ENCODE measurements at regions of chr4 and their contacts with region 1.

Region 1: DNA sequence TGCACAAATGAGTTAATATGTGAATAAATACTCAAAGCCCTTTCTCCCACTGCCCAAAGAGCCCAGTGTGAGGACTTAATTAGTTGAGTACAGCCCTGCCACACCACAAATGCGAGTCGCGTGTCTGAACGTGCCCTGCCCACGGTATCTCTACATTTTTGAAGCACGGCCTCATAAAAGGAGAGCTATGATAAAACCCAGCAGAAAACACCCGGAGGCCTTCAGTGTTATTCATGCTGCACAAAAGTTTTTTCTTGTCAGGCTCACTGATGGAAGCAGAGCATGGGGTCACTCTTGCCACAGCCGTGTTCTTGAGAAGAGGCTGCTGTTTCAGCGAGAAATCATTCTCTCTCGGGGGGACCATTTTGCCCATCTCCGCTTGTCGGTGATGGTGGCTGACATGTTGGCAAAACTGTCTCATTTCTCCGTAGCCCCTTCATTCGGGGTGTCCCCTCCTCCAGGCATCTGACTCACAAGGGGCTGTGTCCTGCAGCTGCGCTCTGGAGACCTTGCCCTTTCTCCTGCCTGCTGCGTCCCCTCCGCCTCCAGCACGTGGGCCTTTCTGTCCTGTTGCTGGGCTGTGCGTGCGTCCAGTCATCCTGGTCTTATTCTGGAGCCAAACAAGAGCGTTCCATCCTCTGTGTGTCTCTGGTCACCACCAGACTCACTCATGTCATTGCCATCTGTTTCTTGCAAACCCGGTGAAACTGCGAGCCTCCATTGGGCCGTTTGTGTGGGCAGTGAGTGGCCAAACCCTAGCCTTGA is 88.8 kb downstream of the SORCS2 start:
- DNase-seq: peak; percentile 87
- H3K4me3 ChIP-seq: no peak overlapping the region
- H3K27ac ChIP-seq: no peak overlapping the region
- H3K4me1 ChIP-seq: peaks cover 26% of the 10 kb centered on the region
- H3K27me3 ChIP-seq: no peaks in the 10 kb centered on the region
- CTCF ChIP-seq: no peak

Region 2: DNA sequence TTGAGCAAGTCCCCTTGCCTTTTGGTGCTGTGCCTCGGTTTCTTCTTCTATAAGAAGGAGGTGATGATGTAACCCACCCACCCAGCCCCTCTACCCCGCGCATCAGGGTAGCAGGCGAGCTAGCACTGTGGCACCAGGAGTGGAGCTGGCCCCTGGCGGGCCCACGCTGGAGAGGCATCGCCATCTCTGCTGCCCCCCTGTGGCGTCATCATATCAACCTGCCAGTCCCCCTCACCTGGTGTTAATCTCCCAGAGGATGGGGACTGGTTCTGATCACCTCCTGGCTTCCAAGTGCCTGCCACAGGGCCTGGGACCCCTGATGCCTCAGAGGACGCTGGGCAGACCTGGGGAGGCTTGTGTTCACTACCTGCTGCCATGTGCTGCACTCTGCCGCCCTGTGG is 95.0 kb before region 1 on chr4:
- CTCF ChIA-PET with region 1: no interaction called
- dilution Hi-C with region 1: no loop called
- in situ Hi-C with region 1: no loop called
- intact Hi-C with region 1: no loop called
- DNase-seq: no peak
- H3K4me3 ChIP-seq: no peak overlapping the region
- H3K27ac ChIP-seq: no peak overlapping the region
- H3K4me1 ChIP-seq: no peaks in the 10 kb centered on the region
- H3K27me3 ChIP-seq: no peaks in the 10 kb centered on the region
- CTCF ChIP-seq: peak in 1 of 2 donors; percentile 46

Region 3: DNA sequence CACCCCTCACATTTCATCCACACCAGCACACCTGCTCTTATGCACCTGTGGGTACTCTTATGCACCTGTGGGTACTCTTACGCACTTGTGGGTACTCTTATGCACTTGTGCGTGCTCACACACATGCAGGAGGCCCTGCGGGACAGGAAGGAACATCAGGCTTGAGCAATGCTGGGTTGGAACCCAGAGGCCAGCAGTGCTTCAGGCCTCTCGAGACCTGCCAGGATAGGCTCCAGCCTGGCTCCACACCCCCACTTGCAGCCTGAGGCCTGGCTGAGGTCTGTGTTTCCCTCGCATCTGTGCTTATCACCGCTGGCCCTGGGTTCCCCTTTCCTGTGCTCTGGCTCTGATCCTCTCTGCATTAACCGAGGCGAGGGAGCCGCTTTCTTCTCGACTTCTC is 54.1 kb before region 1 on chr4:
- CTCF ChIA-PET with region 1: no interaction called
- dilution Hi-C with region 1: loop called (anchors 5 kb)
- in situ Hi-C with region 1: no loop called
- intact Hi-C with region 1: no loop called
- DNase-seq: no peak
- H3K4me3 ChIP-seq: no peak overlapping the region
- H3K27ac ChIP-seq: no peak overlapping the region
- H3K4me1 ChIP-seq: no peaks in the 10 kb centered on the region
- H3K27me3 ChIP-seq: no peaks in the 10 kb centered on the region
- CTCF ChIP-seq: no peak

Region 4: DNA sequence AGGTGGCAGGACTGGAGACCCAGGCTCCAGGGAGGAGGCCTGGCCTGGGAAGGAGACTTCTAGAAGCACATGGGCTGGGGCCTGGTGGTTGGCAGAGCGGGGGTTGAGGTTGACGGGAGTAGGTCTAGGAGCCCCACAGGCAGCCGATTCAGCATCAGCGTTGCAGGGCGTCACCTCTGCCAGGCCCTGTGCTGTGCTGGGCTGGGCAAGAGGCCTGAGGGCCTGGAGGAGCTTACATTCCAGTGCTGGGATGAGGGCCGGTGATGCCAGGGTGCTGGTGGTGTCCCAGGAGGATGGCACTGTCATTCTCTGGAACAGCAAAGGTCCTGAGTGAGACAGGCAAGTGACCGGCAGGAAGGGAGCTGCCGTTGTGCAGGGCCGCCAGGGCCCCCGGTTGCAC is 12.2 kb before region 1 on chr4:
- CTCF ChIA-PET with region 1: no interaction called
- dilution Hi-C with region 1: no loop called
- in situ Hi-C with region 1: no loop called
- intact Hi-C with region 1: loop called (anchors 1 kb)
- DNase-seq: no peak
- H3K4me3 ChIP-seq: no peak overlapping the region
- H3K27ac ChIP-seq: no peak overlapping the region
- H3K4me1 ChIP-seq: peaks cover 8% of the 10 kb centered on the region
- H3K27me3 ChIP-seq: no peaks in the 10 kb centered on the region
- CTCF ChIP-seq: no peak

Region 5: DNA sequence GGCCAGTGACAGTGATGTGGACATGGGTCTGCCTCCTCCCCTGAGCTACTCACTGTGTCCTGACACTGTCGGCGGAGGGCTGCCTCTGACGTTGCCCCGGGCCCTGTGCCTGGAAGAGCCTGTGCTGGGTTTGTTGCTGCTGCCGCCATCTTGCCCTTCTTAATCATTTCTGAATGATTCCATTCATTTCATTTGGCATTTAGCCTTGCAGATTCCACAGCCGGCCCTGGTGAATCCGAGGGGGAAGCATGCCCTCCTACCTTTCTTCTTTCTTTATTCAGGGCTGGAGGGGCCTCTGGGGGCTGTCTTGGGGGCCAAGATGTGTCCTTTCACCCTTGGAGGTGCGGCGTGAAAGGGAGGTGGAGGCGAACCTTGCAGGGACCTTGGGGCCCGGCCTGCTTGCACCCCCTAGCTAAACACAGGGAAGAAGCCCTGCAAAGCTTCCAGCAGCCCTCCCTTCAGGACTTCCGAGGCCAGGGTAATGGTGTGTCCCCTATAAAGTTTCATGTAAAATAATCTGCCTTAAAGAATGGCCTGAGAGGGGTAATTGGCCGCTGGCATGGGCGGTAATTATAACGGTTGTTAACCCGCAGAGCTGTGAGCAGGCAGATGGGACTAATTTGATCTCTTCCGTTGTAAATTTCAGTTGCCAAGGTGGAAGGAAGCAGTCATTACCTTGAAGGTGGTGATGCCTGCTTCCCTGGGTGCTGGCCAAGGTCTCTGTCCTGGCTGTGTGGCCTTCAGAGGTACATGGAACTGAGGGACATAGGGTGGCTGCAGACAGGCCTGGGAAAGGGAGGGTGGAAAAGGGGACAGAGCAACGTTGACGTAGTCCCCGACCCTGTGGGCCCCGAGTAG is 61.3 kb after region 1 on chr4:
- CTCF ChIA-PET with region 1: no interaction called
- dilution Hi-C with region 1: loop called (anchors 5 kb)
- in situ Hi-C with region 1: no loop called
- intact Hi-C with region 1: no loop called
- DNase-seq: no peak
- H3K4me3 ChIP-seq: no peak overlapping the region
- H3K27ac ChIP-seq: no peak overlapping the region
- H3K4me1 ChIP-seq: no peaks in the 10 kb centered on the region
- H3K27me3 ChIP-seq: no peaks in the 10 kb centered on the region
- CTCF ChIP-seq: no peak